K562 (cell line): ENCODE measurements at regions of chr1 and their contacts with region 1.

Region 1: DNA sequence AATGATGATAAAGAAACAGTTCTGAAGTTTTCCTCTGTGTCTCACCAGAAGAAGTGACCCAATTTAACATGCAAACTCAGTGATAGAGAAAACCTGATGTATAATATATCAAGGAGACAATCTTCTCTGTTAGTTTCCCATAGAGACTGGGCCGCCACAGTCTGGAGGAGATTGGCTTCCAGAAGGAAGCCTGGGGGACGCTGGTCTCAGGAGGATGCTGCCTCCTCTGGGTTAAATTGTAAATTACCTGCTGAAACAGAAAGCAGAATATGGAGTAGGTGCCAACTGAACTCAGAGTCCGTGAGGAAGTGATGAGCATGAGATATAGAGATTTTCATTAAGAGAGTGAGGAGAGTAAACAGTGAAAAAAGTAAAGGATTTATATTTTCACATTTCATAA is 15.8 kb downstream of the OR14I1 start:
- DNase-seq: peak in 2 of 4 experiments; percentile 10 to 17
- ATAC-seq: peak; percentile 66
- H3K4me3 ChIP-seq: no peak overlapping the region
- H3K27ac ChIP-seq: no peak overlapping the region
- H3K4me1 ChIP-seq: peaks cover 0 to 5% of the 10 kb centered on the region in 2 experiments; a peak in 2 of 5 replicates
- H3K27me3 ChIP-seq: no peaks in the 10 kb centered on the region
- CTCF ChIP-seq: peak; percentile 45 to 52 (median 50); a peak in 4 of 6 replicates
- EP300 ChIP-seq: no peak
- POLR2A ChIP-seq: no peak
- RAD21 ChIP-seq: peak; percentile 71 to 81

Region 2: DNA sequence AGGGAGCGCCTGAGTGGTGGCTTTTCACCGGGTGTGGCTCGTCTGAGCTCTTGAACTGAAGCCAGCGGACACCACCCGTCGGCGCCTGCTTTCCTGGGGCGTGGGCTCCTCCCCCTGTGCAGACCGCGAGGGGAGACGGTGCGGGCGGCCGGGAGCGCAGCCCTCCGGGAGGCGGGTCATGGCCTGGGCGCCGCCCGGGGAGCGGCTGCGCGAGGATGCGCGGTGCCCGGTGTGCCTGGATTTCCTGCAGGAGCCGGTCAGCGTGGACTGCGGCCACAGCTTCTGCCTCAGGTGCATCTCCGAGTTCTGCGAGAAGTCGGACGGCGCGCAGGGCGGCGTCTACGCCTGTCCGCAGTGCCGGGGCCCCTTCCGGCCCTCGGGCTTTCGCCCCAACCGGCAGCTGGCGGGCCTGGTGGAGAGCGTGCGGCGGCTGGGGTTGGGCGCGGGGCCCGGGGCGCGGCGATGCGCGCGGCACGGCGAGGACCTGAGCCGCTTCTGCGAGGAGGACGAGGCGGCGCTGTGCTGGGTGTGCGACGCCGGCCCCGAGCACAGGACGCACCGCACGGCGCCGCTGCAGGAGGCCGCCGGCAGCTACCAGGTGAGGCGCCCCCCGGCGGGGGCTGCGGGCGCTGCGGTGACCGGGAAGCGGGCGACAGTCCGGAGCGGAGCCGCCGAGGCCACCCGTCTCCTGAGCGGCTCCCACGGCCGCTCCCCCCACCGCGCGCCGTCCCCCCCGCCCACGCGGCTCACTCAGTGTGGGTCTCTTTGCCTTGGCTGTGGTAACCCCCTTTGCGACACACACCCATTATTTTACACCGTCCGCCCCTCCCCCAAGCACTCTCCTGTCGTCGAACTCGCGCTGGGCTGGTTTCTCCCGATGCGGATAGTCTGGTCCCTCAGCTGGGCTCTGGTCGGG is 829.5 kb before region 1 on chr1 and contains the start of gene TRIM58:
- CTCF ChIA-PET with region 1: no interaction called
- POLR2A ChIA-PET with region 1: no interaction called
- in situ Hi-C with region 1: no loop called
- intact Hi-C with region 1: no loop called
- DNase-seq: peak; percentile 92 to 96 (median 94)
- ATAC-seq: peak; percentile 88
- H3K4me3 ChIP-seq: peak within 1 kb of the TSS; percentile 84
- H3K27ac ChIP-seq: peak within 1 kb of the TSS; percentile 88
- H3K4me1 ChIP-seq: peaks cover 34 to 37% of the 10 kb centered on the region in 2 experiments
- H3K27me3 ChIP-seq: no peaks in the 10 kb centered on the region
- CTCF ChIP-seq: peak; percentile 56 to 98 (median 83)
- EP300 ChIP-seq: peak; percentile 57
- POLR2A ChIP-seq: peak; percentile 86
- RAD21 ChIP-seq: peak; percentile 54 to 55
- polyA plus RNA-seq, gene TRIM58: 3.8 to 5.8 TPM

Region 3: DNA sequence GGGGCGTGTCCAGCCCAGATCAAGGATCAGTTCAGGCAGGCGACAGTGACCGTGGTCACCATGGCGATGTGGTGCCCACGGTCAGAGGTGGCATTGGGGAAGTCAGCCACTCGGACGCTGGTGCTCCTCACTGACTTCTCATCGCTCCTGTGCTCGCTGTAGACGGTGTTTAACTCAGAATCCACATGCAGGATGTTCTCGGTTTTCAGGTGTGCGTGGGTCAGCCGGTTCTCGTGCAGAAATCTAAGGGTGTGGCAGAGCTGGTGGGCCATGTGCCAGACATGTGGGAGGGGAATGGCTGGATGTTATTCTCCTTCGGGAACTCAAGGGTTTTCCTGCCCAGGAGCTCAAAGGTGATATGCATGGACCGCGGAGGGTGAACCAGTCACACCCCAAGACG is 750.4 kb before region 1 on chr1:
- CTCF ChIA-PET with region 1: no interaction called
- POLR2A ChIA-PET with region 1: no interaction called
- in situ Hi-C with region 1: no loop called
- intact Hi-C with region 1: loop called (anchors 10 kb)
- DNase-seq: no peak
- ATAC-seq: no peak
- H3K4me3 ChIP-seq: no peak overlapping the region
- H3K27ac ChIP-seq: no peak overlapping the region
- H3K4me1 ChIP-seq: peaks cover 0 to 11% of the 10 kb centered on the region in 2 experiments; a peak in 2 of 5 replicates
- H3K27me3 ChIP-seq: no peaks in the 10 kb centered on the region
- CTCF ChIP-seq: no peak
- EP300 ChIP-seq: no peak
- POLR2A ChIP-seq: no peak
- RAD21 ChIP-seq: no peak

Region 4: DNA sequence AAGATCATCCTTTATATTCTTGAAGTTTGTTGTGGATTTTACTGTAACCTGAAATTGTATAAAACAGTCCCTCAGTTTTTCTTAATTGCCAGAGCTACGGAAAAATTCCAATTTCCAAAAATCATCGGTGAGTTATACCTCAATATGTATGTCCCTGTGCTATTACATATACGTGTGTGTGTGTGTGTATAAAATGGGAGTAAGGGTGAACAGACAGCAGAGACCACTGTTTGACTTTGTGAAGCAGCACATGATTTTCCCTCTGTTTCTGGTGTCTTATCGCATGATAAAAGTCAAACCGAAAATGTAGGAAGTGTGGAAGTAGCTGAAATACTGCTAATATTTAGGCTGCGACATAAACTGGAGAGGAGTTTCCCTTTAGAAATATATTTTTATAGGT is 282.8 kb before region 1 on chr1:
- CTCF ChIA-PET with region 1: interaction called, 4 read pairs
- POLR2A ChIA-PET with region 1: no interaction called
- in situ Hi-C with region 1: no loop called
- intact Hi-C with region 1: loop called (anchors 1 kb)
- DNase-seq: peak; percentile 9 to 86 (median 66)
- ATAC-seq: no peak
- H3K4me3 ChIP-seq: no peak overlapping the region
- H3K27ac ChIP-seq: no peak overlapping the region
- H3K4me1 ChIP-seq: no peaks in the 10 kb centered on the region
- H3K27me3 ChIP-seq: no peaks in the 10 kb centered on the region
- CTCF ChIP-seq: peak; percentile 14 to 44 (median 43); a peak in 2 of 6 replicates
- EP300 ChIP-seq: no peak
- POLR2A ChIP-seq: no peak
- RAD21 ChIP-seq: no peak

Region 5: DNA sequence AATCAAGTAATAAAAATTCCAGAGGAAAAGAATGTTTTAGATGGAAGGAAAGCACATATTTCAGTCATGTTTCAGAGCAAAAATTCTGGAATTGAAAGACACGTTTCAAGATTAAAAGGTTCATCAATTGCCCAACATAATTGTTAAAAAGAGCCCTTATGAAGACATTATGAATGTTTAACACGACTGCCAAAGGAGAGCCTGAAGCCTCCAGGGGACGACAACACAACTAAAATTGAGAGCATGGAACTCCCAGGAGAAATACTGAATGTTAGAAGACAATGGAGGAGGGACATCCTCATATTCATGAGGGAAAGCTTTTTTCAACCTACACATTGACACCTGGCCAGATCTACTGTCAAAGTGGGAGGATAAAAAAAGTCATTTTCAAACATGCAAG is 67.9 kb before region 1 on chr1:
- CTCF ChIA-PET with region 1: no interaction called
- POLR2A ChIA-PET with region 1: no interaction called
- in situ Hi-C with region 1: no loop called
- intact Hi-C with region 1: no loop called
- DNase-seq: peak in 2 of 4 experiments; percentile 5 to 39
- ATAC-seq: peak; percentile 64; the same call in 2 of the 3 replicates
- H3K4me3 ChIP-seq: no peak overlapping the region
- H3K27ac ChIP-seq: no peak overlapping the region
- H3K4me1 ChIP-seq: no peaks in the 10 kb centered on the region
- H3K27me3 ChIP-seq: no peaks in the 10 kb centered on the region
- CTCF ChIP-seq: peak; percentile 24 to 45 (median 41); a peak in 2 of 6 replicates
- EP300 ChIP-seq: no peak
- POLR2A ChIP-seq: no peak
- RAD21 ChIP-seq: peak; percentile 22 to 56; a peak in 3 of 4 replicates

Region 6: GRCh38 chr1:248670003-248670402 is 16.8 kb before region 1 on chr1:
- CTCF ChIA-PET with region 1: no interaction called
- POLR2A ChIA-PET with region 1: no interaction called
- in situ Hi-C with region 1: no loop called
- intact Hi-C with region 1: no loop called
- DNase-seq: no peak
- ATAC-seq: no peak
- H3K4me3 ChIP-seq: no peak overlapping the region
- H3K27ac ChIP-seq: no peak overlapping the region
- H3K4me1 ChIP-seq: no peaks in the 10 kb centered on the region
- H3K27me3 ChIP-seq: no peaks in the 10 kb centered on the region
- CTCF ChIP-seq: no peak
- EP300 ChIP-seq: no peak
- POLR2A ChIP-seq: no peak
- RAD21 ChIP-seq: no peak